ENCODE measurements at regions of chr10 and their contacts with region 1.

Region 1: DNA sequence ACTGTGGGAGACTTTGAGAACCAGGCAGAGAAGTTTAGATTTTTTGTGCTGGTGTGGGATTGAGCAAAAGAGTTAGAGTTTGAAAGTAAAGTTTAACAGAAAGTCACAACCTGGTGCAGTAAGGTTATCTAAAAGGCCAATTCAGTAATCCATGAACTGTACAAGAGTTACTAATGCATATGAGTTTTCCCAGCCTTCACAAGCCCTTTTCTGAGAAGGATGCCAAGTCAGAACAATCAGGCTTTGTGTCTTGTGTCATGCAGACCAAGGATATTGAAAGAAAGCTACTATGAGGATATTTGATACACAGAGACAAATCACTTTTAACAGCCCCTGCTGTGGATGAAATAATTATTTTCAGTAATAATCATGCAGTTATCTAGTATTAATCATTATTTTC is 68.8 kb upstream of the MYO3A start:
- DNase-seq: no peak
- H3K4me3 Mint-ChIP-seq: no peak overlapping the region
- H3K27ac Mint-ChIP-seq: no peak overlapping the region
- H3K4me1 Mint-ChIP-seq: peaks cover 6% of the 10 kb centered on the region
- H3K27me3 Mint-ChIP-seq: peaks cover 16% of the 10 kb centered on the region
- CTCF ChIP-seq: no peak

Region 2: GRCh38 chr10:25875556-25876165 is 10.4 kb after region 1 on chr10:
- CTCF ChIA-PET with region 1: interaction called, 11 read pairs
- POLR2A ChIA-PET with region 1: no interaction called
- intact Hi-C with region 1: no loop called
- DNase-seq: peak; percentile 79
- H3K4me3 Mint-ChIP-seq: no peak overlapping the region
- H3K27ac Mint-ChIP-seq: no peak overlapping the region
- H3K4me1 Mint-ChIP-seq: no peaks in the 10 kb centered on the region
- H3K27me3 Mint-ChIP-seq: peaks cover 18% of the 10 kb centered on the region
- CTCF ChIP-seq: peak; percentile 81

Region 3: DNA sequence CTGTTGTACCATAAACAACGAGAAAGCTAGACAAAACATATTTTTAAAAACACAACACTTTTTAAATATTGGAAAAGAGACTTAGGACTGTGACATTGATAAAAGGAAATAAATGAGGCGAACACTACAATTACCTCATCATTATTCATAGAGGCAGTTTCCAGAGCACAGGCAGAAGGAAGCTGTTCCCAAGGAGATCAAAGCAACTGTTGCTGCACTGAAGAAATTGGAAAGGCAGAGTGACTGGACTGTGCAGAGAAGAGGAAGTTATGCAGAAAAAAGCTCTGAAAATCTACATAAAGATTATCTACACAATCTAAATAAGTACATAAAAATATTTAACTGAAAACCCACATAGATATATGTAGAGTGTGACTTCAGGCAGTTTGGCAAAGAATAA is 101.6 kb after region 1 on chr10:
- CTCF ChIA-PET with region 1: no interaction called
- POLR2A ChIA-PET with region 1: no interaction called
- intact Hi-C with region 1: no loop called
- DNase-seq: no peak
- H3K4me3 Mint-ChIP-seq: no peak overlapping the region
- H3K27ac Mint-ChIP-seq: no peak overlapping the region
- H3K4me1 Mint-ChIP-seq: no peaks in the 10 kb centered on the region
- H3K27me3 Mint-ChIP-seq: peaks cover 82% of the 10 kb centered on the region
- CTCF ChIP-seq: no peak

Measured in MCF 10A (cell line).